ENCODE measurements at regions of chr17 and their contacts with region 1.

Region 1: GRCh38 chr17:41966463-41967140 is at the start of gene CNP:
- DNase-seq: peak; percentile 88
- H3K4me3 Mint-ChIP-seq: peak within 1 kb of the TSS; percentile 79
- H3K27ac Mint-ChIP-seq: peak within 1 kb of the TSS; percentile 77
- H3K4me1 Mint-ChIP-seq: peaks cover 25% of the 10 kb centered on the region
- H3K27me3 Mint-ChIP-seq: no peaks in the 10 kb centered on the region
- CTCF ChIP-seq: no peak
- total RNA-seq, gene CNP: 42.6 and 46.2 TPM in 2 replicates

Region 2: GRCh38 chr17:41417576-41418015 is 549.0 kb before region 1 on chr17:
- CTCF ChIA-PET with region 1: no interaction called
- POLR2A ChIA-PET with region 1: no interaction called
- intact Hi-C with region 1: no loop called
- DNase-seq: peak; percentile 34
- H3K4me3 Mint-ChIP-seq: no peak overlapping the region
- H3K27ac Mint-ChIP-seq: no peak overlapping the region
- H3K4me1 Mint-ChIP-seq: peaks cover 32% of the 10 kb centered on the region
- H3K27me3 Mint-ChIP-seq: no peaks in the 10 kb centered on the region
- CTCF ChIP-seq: peak; percentile 37

Region 3: GRCh38 chr17:41864836-41865595 is 101.6 kb before region 1 on chr17 and contains the start of gene KLHL11:
- CTCF ChIA-PET with region 1: interaction called, 3 read pairs
- POLR2A ChIA-PET with region 1: interaction called, 24 read pairs
- intact Hi-C with region 1: no loop called
- DNase-seq: peak; percentile 89
- H3K4me3 Mint-ChIP-seq: no peak within 1 kb of the TSS
- H3K27ac Mint-ChIP-seq: no peak within 1 kb of the TSS
- H3K4me1 Mint-ChIP-seq: peaks cover 7% of the 10 kb centered on the region
- H3K27me3 Mint-ChIP-seq: no peaks in the 10 kb centered on the region
- CTCF ChIP-seq: no peak
- total RNA-seq, gene KLHL11: 19.1 and 22.3 TPM in 2 replicates

Region 4: GRCh38 chr17:41930009-41930832 is 36.4 kb before region 1 on chr17 and contains the start of gene ODAD4:
- CTCF ChIA-PET with region 1: interaction called, 7 read pairs
- POLR2A ChIA-PET with region 1: interaction called, 29 read pairs
- intact Hi-C with region 1: no loop called
- DNase-seq: peak; percentile 96
- H3K4me3 Mint-ChIP-seq: peak within 1 kb of the TSS; percentile 84
- H3K27ac Mint-ChIP-seq: peak within 1 kb of the TSS; percentile 92
- H3K4me1 Mint-ChIP-seq: peaks cover 17% of the 10 kb centered on the region
- H3K27me3 Mint-ChIP-seq: no peaks in the 10 kb centered on the region
- CTCF ChIP-seq: peak; percentile 19
- total RNA-seq, gene ODAD4: 0.96 and 1.3 TPM in 2 replicates

Region 5: DNA sequence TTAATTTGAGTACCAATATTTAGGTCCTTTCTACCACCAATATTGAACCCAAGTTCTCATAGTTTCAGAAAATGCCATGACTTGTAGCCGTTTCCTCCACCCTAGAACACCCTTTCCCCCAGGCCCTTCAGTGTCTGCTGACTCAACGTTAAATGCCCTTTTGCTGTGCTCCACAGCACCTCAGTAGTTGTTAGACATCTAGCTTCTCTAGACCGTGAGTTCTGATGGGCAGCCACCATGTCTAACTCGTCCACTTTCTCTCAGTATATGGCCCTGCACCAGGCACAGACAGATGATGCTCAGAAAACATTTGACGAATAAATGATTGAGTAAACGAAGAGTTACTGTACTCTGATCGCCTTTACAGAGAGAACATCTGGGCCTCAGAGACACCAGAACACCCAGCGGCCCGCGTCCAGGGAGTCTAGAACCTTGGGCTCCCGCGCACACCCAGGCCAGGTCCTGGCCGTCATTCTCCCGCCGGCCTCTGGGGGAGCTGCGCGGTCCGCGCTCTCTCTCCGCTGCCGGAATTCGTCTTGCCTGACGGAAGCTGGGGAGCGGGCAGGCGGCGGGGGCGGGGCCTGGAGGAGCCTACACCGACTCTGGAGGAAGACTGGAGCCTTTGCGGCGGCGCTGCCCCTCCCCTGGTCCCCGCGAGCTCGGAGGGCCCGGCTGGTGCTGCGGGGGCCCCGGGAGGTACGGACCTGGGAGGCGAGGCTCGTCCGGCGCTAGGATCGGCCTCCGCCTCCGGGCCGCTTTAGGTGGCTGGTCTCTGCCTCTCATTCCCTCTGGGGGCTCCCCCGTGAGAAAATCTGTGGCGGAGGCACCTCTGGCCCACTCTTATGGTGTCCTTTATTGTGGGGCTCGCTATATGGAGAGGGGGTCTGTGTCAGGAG is 53.2 kb after region 1 on chr17 and contains the start of gene NKIRAS2:
- CTCF ChIA-PET with region 1: interaction called, 14 read pairs
- POLR2A ChIA-PET with region 1: interaction called, 138 read pairs
- intact Hi-C with region 1: loop called (anchors 2 kb)
- DNase-seq: peak; percentile 87
- H3K4me3 Mint-ChIP-seq: peak within 1 kb of the TSS; percentile 99
- H3K27ac Mint-ChIP-seq: peak within 1 kb of the TSS; percentile 99
- H3K4me1 Mint-ChIP-seq: peaks cover 27% of the 10 kb centered on the region
- H3K27me3 Mint-ChIP-seq: no peaks in the 10 kb centered on the region
- CTCF ChIP-seq: peak; percentile 88
- total RNA-seq, gene NKIRAS2: 34.1 and 40.0 TPM in 2 replicates

Region 6: DNA sequence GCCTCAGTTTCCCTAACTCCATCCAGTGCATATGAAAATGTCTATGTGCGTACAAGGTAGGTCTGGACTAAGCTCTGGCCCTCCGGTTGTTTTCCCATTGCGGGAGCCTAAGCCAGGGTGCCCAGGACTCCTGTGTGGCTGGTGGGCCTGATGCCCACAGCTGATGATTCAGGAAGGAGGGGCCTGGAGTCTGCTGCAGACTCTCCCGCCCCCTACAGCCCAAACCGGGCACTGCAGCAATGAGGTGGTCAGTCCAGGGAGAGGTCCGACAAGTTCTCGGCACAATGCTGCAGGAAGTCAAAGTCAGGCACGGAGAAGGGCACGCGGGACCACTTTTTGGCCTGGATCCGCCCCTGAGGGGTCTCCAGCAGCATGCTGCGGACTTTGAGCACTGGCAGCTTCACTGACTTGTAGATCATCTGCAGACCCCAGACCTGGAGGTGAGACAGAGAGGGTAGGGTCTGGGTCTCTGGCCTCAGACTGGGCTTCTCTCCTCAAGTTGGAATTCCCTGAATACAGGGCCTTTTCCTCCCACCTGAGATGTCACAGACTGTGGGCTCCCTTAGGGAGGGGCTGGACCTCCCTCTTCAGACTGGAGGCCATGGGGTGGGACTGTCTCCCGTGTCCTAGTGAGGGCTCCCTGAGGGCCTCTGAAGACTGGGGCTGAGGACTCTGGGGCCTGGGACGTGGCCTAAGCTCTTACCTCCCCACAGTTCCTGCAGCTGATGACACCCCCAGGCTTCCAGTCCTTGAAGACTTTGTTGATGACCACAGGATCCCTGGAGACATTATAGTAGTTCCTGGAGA is 135.1 kb after region 1 on chr17:
- CTCF ChIA-PET with region 1: interaction called, 6 read pairs
- POLR2A ChIA-PET with region 1: no interaction called
- intact Hi-C with region 1: loop called (anchors 1 kb)
- DNase-seq: peak; percentile 69
- H3K4me3 Mint-ChIP-seq: no peak overlapping the region
- H3K27ac Mint-ChIP-seq: no peak overlapping the region
- H3K4me1 Mint-ChIP-seq: no peaks in the 10 kb centered on the region
- H3K27me3 Mint-ChIP-seq: no peaks in the 10 kb centered on the region
- CTCF ChIP-seq: peak; percentile 90

Region 7: DNA sequence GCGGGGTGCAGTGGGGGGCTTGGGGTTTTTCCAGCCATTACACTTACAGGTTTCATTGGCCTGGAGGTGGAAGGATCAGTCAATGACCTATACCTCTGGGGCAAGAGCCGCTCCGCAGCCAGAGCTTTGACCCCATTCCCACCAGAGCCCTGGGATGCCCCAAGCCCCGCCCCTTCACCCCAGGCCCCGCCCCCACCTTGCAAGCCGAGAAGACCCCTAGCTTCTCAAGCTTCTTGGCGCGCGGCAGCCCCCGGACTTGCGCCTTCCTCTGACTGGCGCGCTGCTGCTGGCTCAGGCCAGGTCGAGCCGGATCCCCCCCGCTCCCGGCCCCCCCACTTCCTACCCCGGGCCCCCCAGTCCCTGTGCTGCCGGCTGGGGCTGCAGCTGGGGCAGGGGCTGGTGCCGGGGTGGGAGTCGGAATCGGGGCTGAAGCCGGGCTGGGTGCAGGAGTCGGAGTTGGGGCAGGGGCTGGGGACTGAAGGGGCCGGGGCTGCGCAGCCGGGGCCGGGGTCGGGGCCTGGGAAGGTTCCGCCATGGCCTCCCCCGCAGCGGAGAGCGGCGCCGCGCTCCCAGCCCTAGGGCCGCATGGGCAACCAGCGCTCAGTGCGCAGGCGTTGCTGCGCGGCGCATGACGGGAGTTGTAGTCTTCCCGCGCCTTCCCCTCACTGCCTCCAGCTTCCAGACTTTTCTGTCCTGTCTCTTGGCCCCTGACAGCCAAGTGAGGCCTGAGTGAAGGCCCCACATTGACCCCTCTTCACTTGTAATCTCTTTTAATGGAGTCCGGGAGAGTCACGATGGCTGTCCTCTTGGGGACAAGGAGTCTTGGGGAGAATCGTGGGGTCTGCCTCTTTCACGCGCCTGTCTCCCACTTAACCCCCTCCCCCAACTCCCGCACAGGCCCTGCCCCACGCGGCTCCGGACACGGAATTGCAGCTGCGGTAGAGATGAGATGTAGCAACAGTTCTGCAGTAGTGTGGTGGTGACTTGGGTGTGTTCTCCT is 154.5 kb after region 1 on chr17 and contains the start of gene KAT2A:
- CTCF ChIA-PET with region 1: interaction called, 16 read pairs
- POLR2A ChIA-PET with region 1: interaction called, 12 read pairs
- intact Hi-C with region 1: loop called (anchors 1 kb)
- DNase-seq: peak; percentile 83
- H3K4me3 Mint-ChIP-seq: peak within 1 kb of the TSS; percentile 53
- H3K27ac Mint-ChIP-seq: no peak within 1 kb of the TSS
- H3K4me1 Mint-ChIP-seq: peaks cover 6% of the 10 kb centered on the region
- H3K27me3 Mint-ChIP-seq: no peaks in the 10 kb centered on the region
- CTCF ChIP-seq: no peak
- total RNA-seq, gene KAT2A: 37.4 and 44.6 TPM in 2 replicates

Measured in MCF 10A (cell line).